ENCODE measurements at regions of chr18 and their contacts with region 1.

Region 1: GRCh38 chr18:26746279-26747150 is 119.0 kb downstream of the AQP4 start:
- DNase-seq: no peak
- H3K4me3 ChIP-seq: peak overlapping the region in 1 of 4 donors; percentile 7
- H3K27ac ChIP-seq: peak overlapping the region in 4 of 5 donors; percentile 30 to 87 (median 60)
- H3K4me1 ChIP-seq: peaks cover 25 to 42% of the 10 kb centered on the region in 2 donors
- H3K27me3 ChIP-seq: no peaks in the 10 kb centered on the region
- CTCF ChIP-seq: no peak
- POLR2A ChIP-seq: no peak

Region 2: DNA sequence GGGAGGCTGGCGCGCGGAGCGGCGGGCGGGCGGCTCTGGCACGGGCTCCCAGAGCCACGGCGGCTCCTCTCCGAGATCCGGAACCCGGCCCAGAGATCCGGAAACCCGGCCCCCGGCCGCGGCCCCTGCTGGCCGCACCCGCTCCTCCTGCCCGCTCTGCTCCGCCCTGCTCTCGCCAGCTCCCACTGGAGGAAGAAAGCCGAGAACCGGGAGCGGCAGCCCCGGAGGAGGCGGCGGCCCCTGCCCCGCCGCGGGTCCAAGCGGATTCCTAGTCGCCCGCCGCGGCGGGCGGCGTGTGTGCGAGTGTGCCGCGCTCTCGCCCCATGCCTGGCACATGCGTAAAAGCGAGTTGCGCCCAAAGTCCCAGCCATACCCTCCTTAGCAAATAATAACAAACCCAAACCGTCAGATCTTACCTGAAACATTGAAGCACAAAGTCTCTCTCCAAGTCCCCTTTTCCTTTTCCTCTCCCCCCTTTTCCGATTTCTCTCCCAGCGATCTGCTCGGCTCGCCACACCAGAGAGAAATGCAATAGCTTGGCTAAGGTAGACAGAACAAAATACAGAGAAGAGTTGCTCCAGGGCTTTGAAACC is 89.5 kb before region 1 on chr18:
- intact Hi-C with region 1: loop called in 1 of 2 experiments (anchors 10 kb)
- DNase-seq: peak; percentile 74 to 86 (median 81)
- H3K4me3 ChIP-seq: peak overlapping the region; percentile 31 to 92 (median 64)
- H3K27ac ChIP-seq: peak overlapping the region; percentile 59 to 94 (median 86)
- H3K4me1 ChIP-seq: peaks cover 6 to 17% of the 10 kb centered on the region in 2 donors
- H3K27me3 ChIP-seq: no peaks in the 10 kb centered on the region
- CTCF ChIP-seq: peak in 4 of 6 experiments; percentile 23 to 48 (median 39)
- POLR2A ChIP-seq: peak; percentile 77 to 78